BJ (cell line): ENCODE measurements at regions of chr5 and their contacts with region 1.

Region 1: GRCh38 chr5:34522599-34523386 is 133.3 kb upstream of the RAI14 start:
- DNase-seq: no peak
- H3K4me3 ChIP-seq: no peak overlapping the region
- H3K27me3 ChIP-seq: no peaks in the 10 kb centered on the region
- CTCF ChIP-seq: peak; percentile 66

Region 2: GRCh38 chr5:34415559-34416198 is 107.1 kb before region 1 on chr5:
- CTCF ChIA-PET with region 1: no interaction called
- POLR2A ChIA-PET with region 1: no interaction called
- DNase-seq: no peak
- H3K4me3 ChIP-seq: no peak overlapping the region
- H3K27me3 ChIP-seq: no peaks in the 10 kb centered on the region
- CTCF ChIP-seq: no peak

Region 3: GRCh38 chr5:34499001-34499734 is 23.6 kb before region 1 on chr5:
- CTCF ChIA-PET with region 1: interaction called, 16 read pairs
- POLR2A ChIA-PET with region 1: no interaction called
- DNase-seq: peak; percentile 72
- H3K4me3 ChIP-seq: no peak overlapping the region
- H3K27me3 ChIP-seq: no peaks in the 10 kb centered on the region
- CTCF ChIP-seq: no peak

Region 4: GRCh38 chr5:34511915-34512314 is 10.9 kb before region 1 on chr5:
- CTCF ChIA-PET with region 1: interaction called, 14 read pairs
- POLR2A ChIA-PET with region 1: no interaction called
- DNase-seq: no peak
- H3K4me3 ChIP-seq: no peak overlapping the region
- H3K27me3 ChIP-seq: no peaks in the 10 kb centered on the region
- CTCF ChIP-seq: no peak

Region 5: DNA sequence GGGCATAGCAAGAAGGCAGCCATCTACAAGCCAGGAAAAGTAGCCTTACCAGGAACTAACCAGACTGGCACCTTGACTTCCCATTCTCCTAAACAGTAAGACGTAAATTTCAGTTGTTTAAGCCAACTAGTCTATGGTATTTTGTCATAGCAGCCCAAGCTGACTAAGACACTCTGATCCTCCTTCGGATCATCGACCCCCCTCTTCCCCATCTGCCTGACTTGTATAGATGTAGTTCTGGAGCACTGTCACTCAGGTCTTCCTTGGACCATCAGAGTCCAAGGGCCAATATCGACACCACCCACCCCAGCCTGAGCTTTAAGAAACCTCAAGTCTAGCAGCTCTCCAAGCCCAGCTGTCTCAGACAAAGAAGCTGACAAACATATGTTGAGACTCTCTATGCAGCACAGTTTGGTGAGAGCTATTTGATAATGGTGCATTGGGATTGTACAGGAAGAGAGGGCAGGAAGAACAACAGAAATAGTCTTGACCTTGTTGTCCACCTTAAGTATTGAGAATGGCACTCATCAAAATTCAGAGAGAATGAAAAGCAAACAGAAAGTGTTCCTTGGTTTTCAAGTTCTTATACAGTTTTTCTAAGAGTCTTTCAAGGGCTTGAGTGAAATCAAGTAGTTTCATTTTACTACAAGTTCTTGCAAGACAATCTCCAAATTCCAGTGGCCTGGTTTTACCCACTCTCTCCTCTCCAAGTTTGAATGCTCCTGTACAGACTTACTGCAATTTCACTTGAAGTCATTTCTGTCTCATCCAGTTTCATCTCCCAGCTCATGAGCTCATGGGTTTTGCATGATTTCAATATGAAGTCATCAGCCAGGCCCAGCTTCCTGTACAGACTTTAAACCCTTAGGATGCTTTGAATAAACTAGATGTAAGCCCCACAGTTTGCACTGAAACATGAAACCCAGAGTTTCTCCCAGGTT is 11.1 kb after region 1 on chr5:
- CTCF ChIA-PET with region 1: interaction called, 32 read pairs
- POLR2A ChIA-PET with region 1: interaction called, 3 read pairs
- DNase-seq: peak; percentile 86
- H3K4me3 ChIP-seq: no peak overlapping the region
- H3K27me3 ChIP-seq: no peaks in the 10 kb centered on the region
- CTCF ChIP-seq: no peak

Region 6: DNA sequence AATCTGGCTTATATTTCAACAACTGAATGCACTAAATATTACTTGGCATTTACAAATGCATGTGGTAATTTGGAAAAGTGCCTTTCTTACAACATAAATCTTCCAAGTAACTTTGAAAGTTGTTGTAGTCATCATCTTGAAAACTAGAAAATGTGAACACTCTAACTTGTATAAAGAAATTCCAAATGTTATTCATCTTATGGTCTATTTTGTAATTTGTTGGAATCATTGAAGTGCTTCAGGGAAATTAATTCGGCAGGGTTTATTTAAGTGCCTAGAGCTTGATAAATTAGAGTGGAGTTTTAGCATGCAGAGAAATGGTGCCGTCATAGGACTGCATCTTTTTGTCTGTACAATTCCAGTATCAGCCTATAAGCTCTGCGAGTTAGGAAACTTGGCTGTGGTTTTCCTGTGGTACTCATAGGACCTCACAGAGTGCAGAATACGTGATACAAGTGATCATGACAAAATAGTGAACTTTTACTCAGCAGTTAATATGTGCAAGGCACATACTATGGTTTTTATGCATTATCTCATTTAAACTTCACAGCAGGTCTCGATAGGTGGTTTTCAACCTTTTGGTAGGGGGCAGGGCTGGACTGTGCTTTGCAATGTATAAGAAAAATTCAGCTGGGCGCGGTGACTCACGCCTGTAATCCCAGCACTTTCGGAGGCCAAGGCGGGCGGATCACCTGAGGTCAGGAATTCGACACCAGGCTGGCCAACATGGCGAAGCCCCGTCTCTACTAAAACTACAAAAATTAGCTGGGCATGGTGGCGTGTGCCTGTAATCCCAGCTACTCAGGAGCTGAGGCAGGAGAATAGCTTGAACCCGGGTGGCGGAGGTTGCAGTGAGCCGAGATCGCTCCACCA is 212.9 kb after region 1 on chr5:
- CTCF ChIA-PET with region 1: no interaction called
- POLR2A ChIA-PET with region 1: no interaction called
- DNase-seq: peak; percentile 41
- H3K4me3 ChIP-seq: no peak overlapping the region
- H3K27me3 ChIP-seq: no peaks in the 10 kb centered on the region
- CTCF ChIP-seq: no peak

Region 7: GRCh38 chr5:34898258-34898895 is 375.6 kb after region 1 on chr5:
- CTCF ChIA-PET with region 1: interaction called, 12 read pairs
- POLR2A ChIA-PET with region 1: no interaction called
- DNase-seq: peak; percentile 7
- H3K4me3 ChIP-seq: no peak overlapping the region
- H3K27me3 ChIP-seq: no peaks in the 10 kb centered on the region
- CTCF ChIP-seq: peak; percentile 87